OCI-LY7 (cell line): ENCODE measurements at regions of chr10 and their contacts with region 1.

Region 1: GRCh38 chr10:72319416-72320254 is 35.1 kb downstream of the DNAJB12 start:
- DNase-seq: peak; percentile 95
- H3K4me3 ChIP-seq: peak overlapping the region; percentile 66
- H3K27ac ChIP-seq: peak overlapping the region; percentile 97
- H3K4me1 ChIP-seq: peaks cover 82% of the 10 kb centered on the region
- CTCF ChIP-seq: 0 out of 2 replicates have a peak, but pooled peaks have one; percentile 12

Region 2: GRCh38 chr10:70324339-70324861 is 1995.2 kb before region 1 on chr10:
- CTCF ChIA-PET with region 1: interaction called, 12 read pairs
- POLR2A ChIA-PET with region 1: no interaction called
- intact Hi-C with region 1: no loop called
- DNase-seq: peak; percentile 81
- H3K4me3 ChIP-seq: peak overlapping the region; percentile 24
- H3K27ac ChIP-seq: peak overlapping the region; percentile 75
- H3K4me1 ChIP-seq: peaks cover 78% of the 10 kb centered on the region
- CTCF ChIP-seq: no peak

Region 3: GRCh38 chr10:72248468-72249151 is 71.0 kb before region 1 on chr10:
- CTCF ChIA-PET with region 1: no interaction called
- POLR2A ChIA-PET with region 1: interaction called, 9 read pairs
- intact Hi-C with region 1: loop called (anchors 1 kb)
- DNase-seq: peak; percentile 95
- H3K4me3 ChIP-seq: peak overlapping the region; percentile 57
- H3K27ac ChIP-seq: peak overlapping the region; percentile 95
- H3K4me1 ChIP-seq: peaks cover 59% of the 10 kb centered on the region
- CTCF ChIP-seq: no peak

Region 4: GRCh38 chr10:72273410-72274212 is 46.0 kb before region 1 on chr10 and contains the start of gene DDIT4:
- CTCF ChIA-PET with region 1: interaction called, 7 read pairs
- POLR2A ChIA-PET with region 1: interaction called, 42 read pairs
- intact Hi-C with region 1: loop called (anchors 1 kb)
- DNase-seq: peak; percentile 99
- H3K4me3 ChIP-seq: peak within 1 kb of the TSS; percentile 77
- H3K27ac ChIP-seq: peak within 1 kb of the TSS; percentile 22
- H3K4me1 ChIP-seq: peaks cover 39% of the 10 kb centered on the region
- CTCF ChIP-seq: no peak
- total RNA-seq, gene DDIT4: 102 and 105 TPM in 2 replicates

Region 5: DNA sequence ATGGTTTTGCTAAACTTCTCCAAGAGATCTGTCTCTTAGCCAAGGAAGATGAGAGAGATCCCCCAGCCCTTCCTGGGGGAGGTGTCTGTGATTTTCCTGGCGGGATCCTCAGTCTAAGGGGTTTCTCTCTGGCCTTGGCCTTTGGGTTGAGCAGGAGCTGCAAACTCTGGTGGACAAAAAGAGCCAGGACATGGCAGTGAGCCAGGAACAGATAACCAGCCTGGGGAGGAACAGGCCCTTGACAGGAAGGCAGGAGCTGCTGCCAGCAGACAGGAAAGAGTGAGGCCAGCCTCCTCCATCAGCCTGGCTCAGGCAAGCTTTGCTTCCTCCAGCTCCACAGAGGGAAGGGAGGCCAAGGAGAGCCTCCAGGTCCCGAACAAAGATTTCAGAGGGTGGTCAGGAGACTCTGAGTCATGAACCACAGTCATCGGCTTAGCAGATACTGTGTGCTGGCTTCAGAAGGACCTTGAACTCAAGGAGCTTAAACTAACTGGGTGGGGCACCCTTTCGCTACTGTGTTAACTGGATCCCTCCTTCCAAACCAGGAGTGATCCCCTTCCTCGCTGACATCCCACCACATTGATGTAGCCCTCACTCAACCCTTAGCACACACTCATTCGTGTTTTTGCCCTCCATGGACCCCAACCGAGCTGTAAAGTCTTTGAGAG is 11.2 kb before region 1 on chr10:
- CTCF ChIA-PET with region 1: interaction called, 4 read pairs
- POLR2A ChIA-PET with region 1: interaction called, 12 read pairs
- intact Hi-C with region 1: no loop called
- DNase-seq: no peak
- H3K4me3 ChIP-seq: no peak overlapping the region
- H3K27ac ChIP-seq: no peak overlapping the region
- H3K4me1 ChIP-seq: peaks cover 27% of the 10 kb centered on the region
- CTCF ChIP-seq: no peak

Region 6: DNA sequence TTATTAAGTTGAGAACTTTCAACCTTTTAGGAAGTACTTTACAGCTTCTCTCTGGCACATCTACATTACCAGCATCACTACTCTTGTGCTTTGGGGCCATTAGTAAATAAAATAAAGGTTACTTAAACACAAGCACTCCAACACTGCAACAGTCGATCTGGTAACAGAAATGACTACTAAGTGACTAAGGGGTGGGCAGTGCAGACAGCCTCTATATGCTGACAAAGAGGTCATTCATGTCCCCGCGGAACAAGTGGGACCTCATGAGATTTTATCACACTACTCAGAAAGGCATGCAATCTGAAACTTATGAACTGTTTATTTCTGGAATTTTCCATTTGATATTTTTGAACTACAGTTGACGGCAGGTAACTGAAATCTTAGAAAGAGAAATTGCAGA is 146.4 kb after region 1 on chr10:
- CTCF ChIA-PET with region 1: no interaction called
- POLR2A ChIA-PET with region 1: no interaction called
- intact Hi-C with region 1: no loop called
- DNase-seq: no peak
- H3K4me3 ChIP-seq: no peak overlapping the region
- H3K27ac ChIP-seq: no peak overlapping the region
- H3K4me1 ChIP-seq: no peaks in the 10 kb centered on the region
- CTCF ChIP-seq: no peak